ENCODE measurements at regions of chr12 and their contacts with region 1.

Region 1: GRCh38 chr12:106632797-106633450 is 50.1 kb downstream of the RFX4 start:
- DNase-seq: no peak
- ATAC-seq: no peak
- H3K4me3 ChIP-seq: no peak overlapping the region
- H3K4me3 Mint-ChIP-seq: no peak overlapping the region
- H3K27ac ChIP-seq: no peak overlapping the region
- H3K27ac Mint-ChIP-seq: no peak overlapping the region
- H3K4me1 ChIP-seq: no peaks in the 10 kb centered on the region
- H3K4me1 Mint-ChIP-seq: no peaks in the 10 kb centered on the region
- H3K27me3 ChIP-seq: no peaks in the 10 kb centered on the region
- H3K27me3 Mint-ChIP-seq: peaks cover 2 to 5% of the 10 kb centered on the region in 2 donors

Region 2: DNA sequence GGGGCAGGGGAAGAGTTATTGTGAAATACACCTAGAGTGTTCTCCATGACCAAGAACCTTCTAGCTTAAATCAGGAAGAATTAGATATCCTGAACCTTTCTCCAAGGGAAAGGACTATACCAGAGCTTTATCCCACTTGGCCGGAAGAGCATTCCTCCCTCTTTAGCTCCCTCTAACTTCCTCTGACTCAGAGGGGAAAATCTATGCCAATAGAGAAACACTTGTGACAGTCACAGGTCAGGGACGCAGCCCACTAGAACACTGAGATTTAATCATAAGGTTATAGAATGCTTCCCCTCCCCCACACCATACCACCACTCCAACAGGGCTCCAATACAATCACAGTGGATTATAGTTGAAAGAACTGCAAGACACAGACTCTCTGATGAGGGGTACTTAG is 105.6 kb before region 1 on chr12:
- CTCF ChIA-PET with region 1: interaction called in 1 of 2 experiments, 14 read pairs
- POLR2A ChIA-PET with region 1: no interaction called
- DNase-seq: no peak
- ATAC-seq: no peak
- H3K4me3 ChIP-seq: no peak overlapping the region
- H3K4me3 Mint-ChIP-seq: no peak overlapping the region
- H3K27ac ChIP-seq: no peak overlapping the region
- H3K27ac Mint-ChIP-seq: no peak overlapping the region
- H3K4me1 ChIP-seq: no peaks in the 10 kb centered on the region
- H3K4me1 Mint-ChIP-seq: no peaks in the 10 kb centered on the region
- H3K27me3 ChIP-seq: no peaks in the 10 kb centered on the region
- H3K27me3 Mint-ChIP-seq: peaks cover 7 to 8% of the 10 kb centered on the region in 2 donors